SK-N-SH (cell line): ENCODE measurements at regions of chr3 and their contacts with region 1.

Region 1: GRCh38 chr3:126679318-126679751 is 24.4 kb upstream of the TXNRD3 start:
- DNase-seq: peak; percentile 88
- H3K4me3 ChIP-seq: peak overlapping the region in 1 of 2 experiments; percentile 29; a peak in 1 of 4 replicates
- H3K27ac ChIP-seq: peak overlapping the region; percentile 9 to 91; a peak in 3 of 4 replicates
- H3K4me1 ChIP-seq: peaks cover 15 to 52% of the 10 kb centered on the region in 2 experiments; a peak in 3 of 4 replicates
- H3K27me3 ChIP-seq: no peaks in the 10 kb centered on the region
- CTCF ChIP-seq: peak; percentile 87
- EP300 ChIP-seq: peak in 1 of 2 experiments; percentile 13; a peak in 1 of 4 replicates
- RAD21 ChIP-seq: peak; percentile 91

Region 2: GRCh38 chr3:126654571-126655383 is 24.6 kb before region 1 on chr3 and contains the start of gene TXNRD3:
- CTCF ChIA-PET with region 1: interaction called, 17 read pairs
- POLR2A ChIA-PET with region 1: interaction called, 6 read pairs
- DNase-seq: peak; percentile 93
- H3K4me3 ChIP-seq: peak within 1 kb of the TSS; percentile 64 to 82
- H3K27ac ChIP-seq: peak within 1 kb of the TSS; percentile 30 to 76; a peak in 3 of 4 replicates
- H3K4me1 ChIP-seq: peaks cover 0 to 5% of the 10 kb centered on the region in 2 experiments; a peak in 2 of 4 replicates
- H3K27me3 ChIP-seq: no peaks in the 10 kb centered on the region; the same call in 1 of the 2 replicates
- CTCF ChIP-seq: no peak
- EP300 ChIP-seq: no peak
- RAD21 ChIP-seq: 0 out of 2 replicates have a peak, but pooled peaks have one; percentile 18
- polyA plus RNA-seq, gene TXNRD3: 4.7 and 5.2 TPM in 2 replicates

Region 3: GRCh38 chr3:126939338-126939718 is 260.0 kb after region 1 on chr3:
- CTCF ChIA-PET with region 1: interaction called, 18 read pairs
- POLR2A ChIA-PET with region 1: no interaction called
- DNase-seq: peak; percentile 48
- H3K4me3 ChIP-seq: no peak overlapping the region
- H3K27ac ChIP-seq: peak overlapping the region; percentile 27 to 43; a peak in 3 of 4 replicates
- H3K4me1 ChIP-seq: peaks cover 32 to 43% of the 10 kb centered on the region in 2 experiments
- H3K27me3 ChIP-seq: no peaks in the 10 kb centered on the region
- CTCF ChIP-seq: peak; percentile 30
- EP300 ChIP-seq: no peak
- RAD21 ChIP-seq: peak; percentile 53

Region 4: GRCh38 chr3:127011270-127011992 is 332.1 kb after region 1 on chr3:
- CTCF ChIA-PET with region 1: interaction called, 10 read pairs
- POLR2A ChIA-PET with region 1: interaction called, 4 read pairs
- DNase-seq: peak; percentile 84
- H3K4me3 ChIP-seq: no peak overlapping the region; a peak in 1 of 4 replicates
- H3K27ac ChIP-seq: peak overlapping the region in 1 of 2 experiments; percentile 71; a peak in 2 of 4 replicates
- H3K4me1 ChIP-seq: peaks cover 0 to 57% of the 10 kb centered on the region in 2 experiments; a peak in 1 of 4 replicates
- H3K27me3 ChIP-seq: no peaks in the 10 kb centered on the region
- CTCF ChIP-seq: no peak
- EP300 ChIP-seq: peak in 1 of 2 experiments; percentile 72; a peak in 1 of 4 replicates
- RAD21 ChIP-seq: 0 out of 2 replicates have a peak, but pooled peaks have one; percentile 5

Region 5: DNA sequence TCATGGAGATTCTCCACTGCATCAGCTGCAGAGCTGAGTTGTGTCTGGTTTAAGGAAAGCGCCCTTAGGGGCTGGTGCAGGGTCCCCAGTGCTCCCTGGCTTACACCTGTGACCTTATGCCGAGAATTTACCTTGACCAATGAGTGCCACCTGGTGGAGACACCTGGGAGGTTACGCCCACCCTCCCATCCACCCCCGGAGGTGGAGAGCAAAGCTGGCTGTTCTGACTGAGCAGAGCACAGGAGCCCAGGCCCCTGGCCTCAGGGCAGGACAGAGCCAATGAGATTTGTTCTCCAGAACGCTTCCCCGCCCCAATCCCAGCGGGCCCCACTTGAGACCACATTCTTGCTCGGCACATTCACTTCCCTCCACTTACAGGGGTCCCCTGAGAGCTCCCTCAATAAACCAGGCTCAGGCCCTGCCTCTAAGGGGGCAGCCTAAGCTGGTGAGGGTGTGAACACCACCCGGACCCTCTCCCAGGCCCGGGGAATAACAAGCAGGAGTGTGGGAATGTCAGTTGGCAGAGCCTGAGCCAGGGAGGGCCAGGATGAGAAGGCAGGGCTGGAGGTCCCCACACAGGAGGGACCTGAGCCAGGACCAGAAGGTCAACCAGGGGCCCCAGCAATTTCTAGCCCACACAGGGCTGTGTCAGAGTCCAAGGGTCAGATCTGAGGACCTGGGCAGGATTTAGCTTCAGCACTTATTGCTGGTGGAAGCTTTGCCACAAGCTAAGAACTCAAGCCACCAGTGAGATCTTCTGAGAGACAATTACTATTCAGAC is 794.1 kb after region 1 on chr3:
- CTCF ChIA-PET with region 1: interaction called, 12 read pairs
- POLR2A ChIA-PET with region 1: no interaction called
- DNase-seq: peak; percentile 79
- H3K4me3 ChIP-seq: no peak overlapping the region
- H3K27ac ChIP-seq: no peak overlapping the region
- H3K4me1 ChIP-seq: peaks cover 0 to 4% of the 10 kb centered on the region in 2 experiments; a peak in 1 of 4 replicates
- H3K27me3 ChIP-seq: peaks cover 2% of the 10 kb centered on the region; the same call in 1 of the 2 replicates
- CTCF ChIP-seq: peak; percentile 37; the same call in 1 of the 2 replicates
- EP300 ChIP-seq: no peak
- RAD21 ChIP-seq: peak; percentile 54